Activated naive CD8-positive, alpha-beta T cell treated with anti-CD3 and anti-CD28 coated beads, Interleukin-2, amount 10 ng/mL, durations not matched to agents 7 days and 5 days (primary cell): ENCODE measurements at regions of chr6 and their contacts with region 1.

Region 1: GRCh38 chr6:27864906-27865849 is 47.0 kb downstream of the OR2B2 start:
- DNase-seq: peak; percentile 83
- ATAC-seq: peak; percentile 56
- H3K4me3 Mint-ChIP-seq: peak overlapping the region; percentile 99
- H3K27ac Mint-ChIP-seq: peak overlapping the region; percentile 100
- H3K4me1 Mint-ChIP-seq: peaks cover 57% of the 10 kb centered on the region
- H3K27me3 Mint-ChIP-seq: no peaks in the 10 kb centered on the region

Region 2: DNA sequence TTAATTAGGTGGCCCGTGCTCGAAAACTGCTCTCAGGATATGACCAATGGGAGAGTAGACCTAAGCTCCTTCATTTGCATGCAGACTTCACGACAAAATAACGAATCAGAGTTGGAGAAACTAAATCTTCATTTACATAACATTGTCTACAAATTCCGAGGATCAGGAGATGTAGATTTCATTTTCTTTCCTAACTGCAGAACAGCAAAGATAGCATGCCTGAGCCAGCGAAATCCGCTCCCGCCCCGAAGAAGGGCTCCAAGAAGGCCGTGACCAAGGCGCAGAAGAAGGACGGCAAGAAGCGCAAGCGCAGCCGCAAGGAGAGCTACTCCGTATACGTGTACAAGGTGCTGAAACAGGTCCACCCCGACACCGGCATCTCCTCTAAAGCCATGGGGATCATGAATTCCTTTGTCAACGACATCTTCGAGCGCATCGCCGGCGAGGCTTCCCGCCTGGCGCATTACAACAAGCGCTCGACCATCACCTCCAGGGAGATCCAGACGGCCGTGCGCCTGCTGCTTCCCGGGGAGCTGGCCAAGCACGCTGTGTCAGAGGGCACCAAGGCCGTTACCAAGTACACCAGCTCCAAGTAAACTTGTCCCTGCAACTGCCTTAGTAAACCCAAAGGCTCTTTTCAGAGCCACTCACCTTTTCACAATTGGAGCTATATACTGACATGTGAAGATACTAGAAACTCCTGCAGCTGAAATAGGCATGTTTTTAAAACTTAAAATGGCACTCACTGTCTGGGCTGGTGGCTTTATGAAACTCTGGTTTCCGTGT is 1681.4 kb before region 1 on chr6:
- POLR2A ChIA-PET with region 1: interaction called, 12 read pairs
- DNase-seq: peak; percentile 78
- ATAC-seq: peak; percentile 85
- H3K4me3 Mint-ChIP-seq: peak overlapping the region; percentile 96
- H3K27ac Mint-ChIP-seq: peak overlapping the region; percentile 99
- H3K4me1 Mint-ChIP-seq: peaks cover 48% of the 10 kb centered on the region
- H3K27me3 Mint-ChIP-seq: no peaks in the 10 kb centered on the region

Region 3: GRCh38 chr6:27138837-27139755 is 726.1 kb before region 1 on chr6:
- POLR2A ChIA-PET with region 1: interaction called, 204 read pairs
- DNase-seq: peak; percentile 81
- ATAC-seq: peak; percentile 73
- H3K4me3 Mint-ChIP-seq: peak overlapping the region; percentile 95
- H3K27ac Mint-ChIP-seq: peak overlapping the region; percentile 98
- H3K4me1 Mint-ChIP-seq: peaks cover 39% of the 10 kb centered on the region
- H3K27me3 Mint-ChIP-seq: no peaks in the 10 kb centered on the region

Region 4: DNA sequence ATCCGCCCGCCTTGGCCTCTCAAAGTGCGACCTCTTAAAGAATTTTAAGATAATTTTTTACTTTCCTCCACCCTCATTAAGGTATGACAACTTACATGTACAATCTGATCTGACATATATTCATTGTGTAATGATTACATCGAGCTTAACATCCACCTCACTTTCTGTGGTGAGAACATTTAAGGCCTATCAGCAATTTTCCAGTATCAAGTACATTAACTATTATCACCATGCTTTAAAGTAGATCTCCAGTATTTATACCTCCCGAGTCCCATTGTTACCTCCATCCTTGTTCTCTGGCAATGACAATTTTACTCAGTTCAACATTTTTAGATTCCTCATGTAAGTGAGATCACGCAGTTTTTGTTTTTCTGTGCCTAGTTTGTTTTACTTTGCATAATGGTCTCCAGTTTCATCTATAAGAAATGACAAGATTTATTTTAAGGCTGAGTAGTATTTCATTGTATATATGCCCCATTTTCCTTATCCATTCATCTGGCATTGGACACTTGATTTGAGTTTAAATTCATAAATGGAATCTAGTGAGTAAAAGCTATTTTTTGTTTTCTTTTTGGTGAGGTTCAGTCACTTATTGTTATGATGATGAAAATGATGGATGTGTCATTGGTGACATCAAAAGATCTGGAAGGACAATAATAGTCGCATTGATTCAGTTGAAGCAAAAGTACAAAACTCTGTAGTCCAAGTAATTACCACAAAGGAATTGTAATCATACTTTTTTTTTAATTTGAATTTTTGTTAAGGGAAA is 40.0 kb before region 1 on chr6:
- POLR2A ChIA-PET with region 1: interaction called, 2,159 read pairs
- DNase-seq: no peak
- ATAC-seq: peak; percentile 2
- H3K4me3 Mint-ChIP-seq: peak overlapping the region; percentile 90
- H3K27ac Mint-ChIP-seq: peak overlapping the region; percentile 99
- H3K4me1 Mint-ChIP-seq: peaks cover 39% of the 10 kb centered on the region
- H3K27me3 Mint-ChIP-seq: no peaks in the 10 kb centered on the region

Region 5: GRCh38 chr6:27838058-27838944 is 26.9 kb before region 1 on chr6:
- POLR2A ChIA-PET with region 1: interaction called, 2,159 read pairs
- DNase-seq: peak; percentile 84
- ATAC-seq: peak; percentile 74
- H3K4me3 Mint-ChIP-seq: no peak overlapping the region
- H3K27ac Mint-ChIP-seq: no peak overlapping the region
- H3K4me1 Mint-ChIP-seq: peaks cover 26% of the 10 kb centered on the region
- H3K27me3 Mint-ChIP-seq: peaks cover 2% of the 10 kb centered on the region

Region 6: DNA sequence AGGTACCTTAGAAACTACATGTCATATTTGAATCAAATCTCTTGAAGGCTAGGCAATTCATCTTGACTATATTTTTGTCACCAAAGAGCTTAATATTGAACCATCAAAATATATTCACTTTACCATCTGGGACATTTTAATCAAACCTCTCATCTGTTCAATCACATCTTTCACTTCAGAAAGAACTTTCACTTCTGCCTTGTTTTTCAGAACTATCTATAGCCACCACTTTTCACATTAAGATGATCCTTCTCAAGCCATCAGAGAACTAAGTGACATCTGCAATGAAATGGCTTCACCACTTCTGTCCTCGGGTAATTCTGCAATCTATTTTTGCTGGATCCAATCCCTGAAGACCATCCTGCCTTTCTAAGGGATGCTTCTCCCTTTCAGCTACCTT is 10.8 kb before region 1 on chr6:
- POLR2A ChIA-PET with region 1: interaction called, 66 read pairs
- DNase-seq: no peak
- ATAC-seq: no peak
- H3K4me3 Mint-ChIP-seq: no peak overlapping the region
- H3K27ac Mint-ChIP-seq: no peak overlapping the region
- H3K4me1 Mint-ChIP-seq: no peaks in the 10 kb centered on the region
- H3K27me3 Mint-ChIP-seq: peaks cover 9% of the 10 kb centered on the region